ENCODE measurements at regions of chr20 and their contacts with region 1.

Region 1: DNA sequence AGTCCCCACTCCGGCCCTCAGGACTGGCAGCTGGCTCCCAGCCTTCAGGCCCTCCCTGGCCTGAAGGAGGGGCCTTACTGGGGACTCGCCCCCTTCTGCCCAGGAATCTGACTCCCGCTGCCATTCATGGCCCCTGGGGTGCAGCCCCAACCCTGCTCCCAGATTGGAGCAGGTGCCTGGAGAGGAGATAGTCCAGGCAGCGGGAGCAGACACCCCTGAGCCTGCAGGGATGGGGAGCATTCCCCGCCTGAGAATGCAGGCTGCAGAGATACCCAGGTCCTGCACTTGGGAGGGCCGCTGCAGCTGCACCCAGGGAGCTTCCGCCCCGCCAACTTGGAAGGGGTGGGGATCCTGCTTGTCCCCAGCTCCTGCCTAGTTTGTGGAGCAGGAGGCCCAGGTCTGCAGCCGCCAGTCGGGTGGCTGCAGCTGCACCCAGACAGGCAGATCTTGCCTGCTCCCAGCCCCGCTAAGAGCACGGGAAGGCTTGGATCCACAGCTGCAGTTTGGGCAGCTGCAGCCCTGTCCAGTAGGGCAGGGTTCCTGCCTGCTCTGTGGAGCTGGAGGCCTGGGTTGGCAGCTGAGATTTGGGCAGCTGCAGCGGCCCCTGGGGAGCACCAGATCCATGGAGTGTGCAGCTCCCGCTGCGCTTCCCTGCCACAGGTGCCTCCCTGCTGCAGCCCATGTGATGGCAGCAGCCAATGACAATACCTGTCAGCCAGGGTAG is 5.2 kb downstream of the GTSF1L start:
- DNase-seq: no peak
- H3K4me3 Mint-ChIP-seq: peak overlapping the region; percentile 66
- H3K27ac Mint-ChIP-seq: peak overlapping the region; percentile 79
- H3K4me1 Mint-ChIP-seq: peaks cover 16% of the 10 kb centered on the region
- H3K27me3 Mint-ChIP-seq: no peaks in the 10 kb centered on the region

Region 2: GRCh38 chr20:43736588-43737158 is 15.1 kb after region 1 on chr20:
- intact Hi-C with region 1: loop called (anchors 2 kb)
- DNase-seq: peak; percentile 78
- H3K4me3 Mint-ChIP-seq: peak overlapping the region; percentile 10
- H3K27ac Mint-ChIP-seq: peak overlapping the region; percentile 78
- H3K4me1 Mint-ChIP-seq: peaks cover 24% of the 10 kb centered on the region
- H3K27me3 Mint-ChIP-seq: no peaks in the 10 kb centered on the region

Measured in activated CD4-positive, alpha-beta T cell treated with anti-CD3 and anti-CD28 coated beads, Interleukin-2, amount 10 ng/mL, durations not matched to agents 24 days and 14 days (primary cell).